RWPE1 (cell line): ENCODE measurements at regions of chr7 and their contacts with region 1.

Region 1: DNA sequence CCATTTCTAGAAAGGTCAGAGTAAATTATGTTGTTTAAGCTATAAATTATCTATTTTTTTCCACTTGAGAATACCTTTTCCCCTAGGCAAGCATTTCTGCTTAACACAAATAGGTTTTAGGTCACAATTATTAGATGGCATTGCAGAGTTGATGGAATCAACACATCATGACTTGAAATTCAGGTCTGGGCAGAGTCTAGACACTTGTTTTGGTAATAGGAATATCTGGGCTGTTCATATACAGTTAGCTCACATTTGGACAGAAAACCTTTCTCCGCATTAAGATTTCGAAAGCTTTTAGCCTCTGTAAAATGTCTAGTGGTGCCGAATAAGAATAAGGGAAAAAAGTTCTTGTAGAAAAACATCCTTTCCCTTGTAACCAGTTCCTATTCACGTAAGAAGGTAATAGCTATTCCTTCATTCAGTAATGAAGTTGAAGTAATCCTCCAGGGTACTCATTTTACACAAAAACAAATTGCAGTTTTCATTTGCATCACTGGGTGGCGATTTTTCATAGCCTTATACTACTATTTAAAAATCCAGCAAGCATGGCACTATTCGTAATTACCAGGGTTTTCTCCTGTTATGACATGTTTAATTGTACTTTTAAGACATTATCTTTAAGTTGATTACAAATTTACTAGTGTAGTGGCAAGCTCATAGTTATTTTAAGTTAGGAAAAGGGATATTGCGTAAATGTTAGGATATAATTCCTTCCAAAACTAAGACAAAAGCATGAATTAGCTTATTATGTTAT is 37.0 kb downstream of the RPA3 start:
- DNase-seq: peak; percentile 42
- H3K27ac ChIP-seq: no peak overlapping the region
- CTCF ChIP-seq: peak; percentile 81

Region 2: GRCh38 chr7:7761340-7761980 is 80.1 kb after region 1 on chr7:
- CTCF ChIA-PET with region 1: interaction called, 22 read pairs
- POLR2A ChIA-PET with region 1: no interaction called
- DNase-seq: peak; percentile 24
- H3K27ac ChIP-seq: no peak overlapping the region
- CTCF ChIP-seq: peak; percentile 60

Region 3: GRCh38 chr7:7848246-7848645 is 166.9 kb after region 1 on chr7:
- CTCF ChIA-PET with region 1: no interaction called
- POLR2A ChIA-PET with region 1: no interaction called
- DNase-seq: no peak
- H3K27ac ChIP-seq: no peak overlapping the region
- CTCF ChIP-seq: no peak